PC-3 (cell line): ENCODE measurements at regions of chr4 and their contacts with region 1.

Region 1: GRCh38 chr4:122577808-122578781 is 42.8 kb downstream of the IL21 start:
- DNase-seq: peak; percentile 75
- ATAC-seq: peak; percentile 73
- H3K4me3 ChIP-seq: no peak overlapping the region
- H3K27ac ChIP-seq: no peak overlapping the region
- H3K4me1 ChIP-seq: no peaks in the 10 kb centered on the region
- H3K27me3 ChIP-seq: no peaks in the 10 kb centered on the region
- CTCF ChIP-seq: peak; percentile 64

Region 2: GRCh38 chr4:121900132-121900983 is 677.7 kb before region 1 on chr4:
- CTCF ChIA-PET with region 1: interaction called, 3 read pairs
- POLR2A ChIA-PET with region 1: no interaction called
- intact Hi-C with region 1: loop called (anchors 5 kb)
- DNase-seq: peak; percentile 66
- ATAC-seq: peak; percentile 70
- H3K4me3 ChIP-seq: no peak overlapping the region
- H3K27ac ChIP-seq: no peak overlapping the region
- H3K4me1 ChIP-seq: no peaks in the 10 kb centered on the region
- H3K27me3 ChIP-seq: peaks cover 30% of the 10 kb centered on the region
- CTCF ChIP-seq: peak; percentile 80

Region 3: GRCh38 chr4:122309988-122310626 is 268.0 kb before region 1 on chr4:
- CTCF ChIA-PET with region 1: no interaction called
- POLR2A ChIA-PET with region 1: no interaction called
- intact Hi-C with region 1: loop called (anchors 1 kb)
- DNase-seq: peak; percentile 31
- ATAC-seq: no peak
- H3K4me3 ChIP-seq: no peak overlapping the region
- H3K27ac ChIP-seq: no peak overlapping the region
- H3K4me1 ChIP-seq: no peaks in the 10 kb centered on the region
- H3K27me3 ChIP-seq: no peaks in the 10 kb centered on the region
- CTCF ChIP-seq: peak; percentile 55

Region 4: GRCh38 chr4:122458625-122459024 is 119.5 kb before region 1 on chr4:
- CTCF ChIA-PET with region 1: interaction called, 3 read pairs
- POLR2A ChIA-PET with region 1: no interaction called
- intact Hi-C with region 1: loop called (anchors 10 kb)
- DNase-seq: peak; percentile 73
- ATAC-seq: peak; percentile 84
- H3K4me3 ChIP-seq: peak overlapping the region; percentile 67
- H3K27ac ChIP-seq: peak overlapping the region; percentile 56
- H3K4me1 ChIP-seq: peaks cover 24% of the 10 kb centered on the region
- H3K27me3 ChIP-seq: no peaks in the 10 kb centered on the region
- CTCF ChIP-seq: no peak

Region 5: DNA sequence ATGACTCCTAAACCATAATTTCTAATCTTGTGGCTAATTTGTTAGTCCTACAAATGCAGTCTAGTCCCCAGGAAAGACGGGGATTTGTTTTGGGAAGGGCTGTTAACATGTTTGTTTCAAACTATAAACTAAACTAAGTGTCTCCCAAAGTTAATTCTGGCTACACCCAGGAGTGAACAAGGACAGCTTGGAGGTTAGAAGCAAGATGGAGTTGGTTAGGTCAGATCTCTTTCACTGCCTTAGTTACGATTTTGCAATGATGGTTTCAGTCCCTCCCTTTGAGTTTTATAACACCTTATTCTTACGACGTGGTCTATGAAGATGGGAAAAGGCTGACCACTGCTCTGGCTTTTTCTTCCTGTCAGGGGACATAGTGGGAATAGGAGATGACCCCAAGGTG is 94.6 kb before region 1 on chr4:
- CTCF ChIA-PET with region 1: no interaction called
- POLR2A ChIA-PET with region 1: interaction called, 11 read pairs
- intact Hi-C with region 1: no loop called
- DNase-seq: no peak
- ATAC-seq: no peak
- H3K4me3 ChIP-seq: no peak overlapping the region
- H3K27ac ChIP-seq: no peak overlapping the region
- H3K4me1 ChIP-seq: peaks cover 10% of the 10 kb centered on the region
- H3K27me3 ChIP-seq: no peaks in the 10 kb centered on the region
- CTCF ChIP-seq: no peak